Aorta (tissue), 5 donors: ENCODE measurements at regions of chr1 and their contacts with region 1.

Region 1: DNA sequence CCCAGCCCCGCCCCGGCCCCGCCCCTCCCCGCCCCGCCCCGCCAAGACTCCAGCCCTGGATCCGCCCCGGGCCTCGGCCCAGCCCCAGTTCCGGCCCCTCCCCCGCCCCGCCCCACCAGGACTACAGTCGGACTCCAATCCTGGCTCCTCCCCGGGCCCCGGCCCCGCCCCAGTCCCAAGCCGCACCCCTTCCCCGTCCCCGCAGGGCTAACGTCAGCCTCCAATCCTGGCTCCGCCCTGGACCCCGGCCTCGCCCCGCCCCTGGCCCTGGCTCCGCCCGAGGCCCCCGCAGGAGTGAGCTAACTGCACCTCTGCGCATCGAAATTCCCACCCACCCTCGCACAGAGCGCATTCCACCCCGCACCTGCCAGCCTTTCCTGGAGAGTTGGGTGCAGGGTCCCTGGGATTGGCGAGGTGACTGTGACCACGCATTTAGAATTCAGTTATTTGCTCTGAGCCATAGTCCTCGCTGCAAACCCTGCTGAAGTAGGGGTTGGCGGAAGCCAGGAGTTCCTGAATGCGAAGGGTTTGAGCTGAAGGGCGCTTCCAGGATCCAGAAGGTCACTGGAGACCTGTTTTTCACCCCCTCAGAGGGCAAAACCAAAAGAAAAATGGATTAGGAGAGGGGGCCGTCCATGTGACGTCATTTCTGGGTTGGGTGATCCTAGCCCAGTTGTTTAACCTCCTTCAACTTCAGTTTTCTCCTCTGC is 588 bp upstream of the IGSF8 start:
- DNase-seq: peak; percentile 99 to 100
- ATAC-seq: peak; percentile 93
- H3K4me3 ChIP-seq: peak overlapping the region in 1 of 2 donors; percentile 31
- H3K27ac ChIP-seq: peak overlapping the region; percentile 68 to 96
- H3K4me1 ChIP-seq: no peaks in the 10 kb centered on the region
- H3K27me3 ChIP-seq: no peaks in the 10 kb centered on the region

Region 2: GRCh38 chr1:159924981-159925712 is 173.9 kb before region 1 on chr1 and contains the start of gene TAGLN2:
- intact Hi-C with region 1: loop called in 1 of 2 experiments (anchors 5 kb)
- DNase-seq: peak; percentile 96 to 98
- ATAC-seq: peak; percentile 88
- H3K4me3 ChIP-seq: peak within 1 kb of the TSS; percentile 66 to 86
- H3K27ac ChIP-seq: peak within 1 kb of the TSS; percentile 88 to 95
- H3K4me1 ChIP-seq: no peaks in the 10 kb centered on the region
- H3K27me3 ChIP-seq: no peaks in the 10 kb centered on the region
- total RNA-seq, gene TAGLN2: 316 to 350 TPM

Region 3: GRCh38 chr1:160058087-160058486 is 40.9 kb before region 1 on chr1:
- intact Hi-C with region 1: no loop called
- DNase-seq: no peak
- ATAC-seq: no peak
- H3K4me3 ChIP-seq: no peak overlapping the region
- H3K27ac ChIP-seq: no peak overlapping the region
- H3K4me1 ChIP-seq: no peaks in the 10 kb centered on the region
- H3K27me3 ChIP-seq: no peaks in the 10 kb centered on the region

Region 4: DNA sequence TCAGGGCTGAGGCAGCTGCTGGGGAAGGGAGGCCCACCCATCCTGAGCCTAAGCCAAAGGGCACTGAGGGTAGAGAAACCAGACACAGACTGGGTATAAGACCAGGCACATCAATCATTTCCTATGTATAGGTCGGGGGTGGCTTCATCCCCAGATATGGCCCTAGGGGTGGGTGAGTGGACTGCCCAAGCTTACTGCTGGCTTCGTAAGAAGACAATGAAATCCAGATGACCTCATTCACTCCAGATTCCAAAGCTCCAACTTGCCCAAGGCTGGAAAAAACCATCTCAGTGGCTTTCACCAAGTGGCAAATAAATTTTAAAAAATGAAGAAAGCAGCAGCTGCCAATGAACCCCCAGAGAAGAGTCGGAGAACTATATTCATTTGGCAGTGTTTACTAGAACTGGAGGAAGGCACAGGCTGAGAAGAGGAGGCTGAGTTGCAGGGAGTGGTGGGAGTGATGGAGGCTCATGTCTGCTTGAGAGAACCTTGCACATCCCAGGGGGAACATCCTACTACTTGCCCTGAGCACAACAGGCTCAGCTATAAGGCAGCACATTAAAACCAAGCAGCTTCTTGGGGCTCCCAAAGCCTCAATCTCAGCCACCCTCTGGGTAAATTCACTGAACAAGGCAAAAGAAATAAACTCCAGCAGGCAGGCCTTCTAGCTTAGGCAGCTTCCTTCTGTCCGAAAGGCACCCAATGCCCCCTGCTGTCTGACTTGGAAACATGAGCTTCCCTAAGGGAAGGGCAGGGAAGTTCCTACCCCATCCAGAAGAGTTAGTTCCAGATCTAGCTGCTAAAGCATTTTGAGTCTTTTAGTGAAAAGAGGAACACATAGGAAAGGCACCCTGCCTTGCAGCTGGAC is 120.3 kb after region 1 on chr1:
- intact Hi-C with region 1: loop called in 1 of 2 experiments (anchors 2 kb)
- DNase-seq: peak in 1 of 2 donors; percentile 67
- ATAC-seq: peak; percentile 80
- H3K4me3 ChIP-seq: no peak overlapping the region
- H3K27ac ChIP-seq: peak overlapping the region in 1 of 2 donors; percentile 73
- H3K4me1 ChIP-seq: peaks cover 0 to 3% of the 10 kb centered on the region in 2 donors
- H3K27me3 ChIP-seq: no peaks in the 10 kb centered on the region

Region 5: DNA sequence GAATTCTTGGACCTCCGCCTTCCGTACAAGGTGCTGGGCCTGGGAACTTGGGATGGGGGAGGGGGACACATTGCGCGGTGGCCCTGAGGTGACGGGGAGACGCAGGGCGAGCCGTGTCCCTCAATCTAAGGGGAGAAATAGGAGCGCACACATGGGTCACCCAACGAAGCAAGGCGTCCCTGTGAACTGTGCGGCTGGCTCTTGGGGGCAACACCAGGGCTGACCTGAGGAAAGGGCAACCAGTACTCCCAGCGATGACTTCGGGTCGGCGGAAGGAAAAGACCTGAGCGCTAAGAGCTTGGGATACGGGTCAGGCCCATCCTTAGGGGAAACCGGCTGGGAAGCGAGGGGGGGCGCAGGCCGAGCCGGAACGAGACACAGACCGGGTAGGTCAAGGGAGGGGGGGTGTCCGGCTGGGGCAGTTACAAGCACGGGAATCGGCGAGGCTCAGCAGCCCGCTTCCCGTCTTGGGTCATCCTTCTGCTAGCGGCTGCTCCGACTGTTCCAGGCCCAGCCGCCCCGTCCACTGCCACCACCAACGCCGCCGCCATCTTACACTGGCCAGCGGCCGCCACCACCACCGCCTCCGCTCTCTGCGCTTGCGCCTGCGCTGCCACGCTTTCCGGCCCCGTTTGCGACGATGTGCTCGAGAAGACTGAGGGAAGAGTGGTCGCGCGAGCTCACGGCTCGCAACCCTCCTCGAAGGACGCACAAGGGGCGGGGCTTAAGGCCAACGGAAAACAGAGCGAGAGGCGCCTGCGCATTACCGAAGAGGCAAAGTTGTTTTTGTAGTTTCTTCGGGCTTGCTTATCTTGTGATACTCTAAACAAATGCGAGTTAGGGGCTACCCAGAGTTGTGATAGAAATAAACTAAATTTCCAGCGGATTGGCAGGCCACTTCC is 163.1 kb after region 1 on chr1 and contains the start of gene DCAF8:
- intact Hi-C with region 1: loop called in 1 of 2 experiments (anchors 5 kb)
- DNase-seq: peak; percentile 99 to 100
- ATAC-seq: peak; percentile 99
- H3K4me3 ChIP-seq: peak within 1 kb of the TSS; percentile 69 to 93
- H3K27ac ChIP-seq: peak within 1 kb of the TSS; percentile 72 to 87
- H3K4me1 ChIP-seq: peaks cover 0 to 7% of the 10 kb centered on the region in 2 donors
- H3K27me3 ChIP-seq: no peaks in the 10 kb centered on the region
- total RNA-seq, gene DCAF8: 134 to 152 TPM

Region 6: DNA sequence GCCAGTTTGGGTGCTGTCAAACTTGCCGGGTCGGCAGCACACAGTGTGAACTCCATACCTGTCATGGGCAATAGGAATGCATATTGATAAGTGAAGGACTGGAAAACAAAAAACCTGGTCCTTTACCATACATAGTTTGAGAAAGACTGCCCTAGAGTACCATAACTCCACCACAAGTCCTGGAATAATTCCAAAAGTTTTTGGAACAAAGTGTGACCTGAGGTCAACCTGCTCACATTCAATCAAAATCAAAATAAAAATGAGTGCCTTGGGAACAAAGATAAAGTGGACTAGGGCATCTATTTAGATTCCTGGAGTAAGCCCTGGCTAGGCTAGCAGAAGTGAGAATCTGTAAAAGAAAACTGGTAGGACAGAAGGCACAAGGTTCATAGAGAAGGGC is 178.3 kb after region 1 on chr1:
- intact Hi-C with region 1: no loop called
- DNase-seq: no peak
- ATAC-seq: no peak
- H3K4me3 ChIP-seq: no peak overlapping the region
- H3K27ac ChIP-seq: no peak overlapping the region
- H3K4me1 ChIP-seq: no peaks in the 10 kb centered on the region
- H3K27me3 ChIP-seq: no peaks in the 10 kb centered on the region

Region 7: DNA sequence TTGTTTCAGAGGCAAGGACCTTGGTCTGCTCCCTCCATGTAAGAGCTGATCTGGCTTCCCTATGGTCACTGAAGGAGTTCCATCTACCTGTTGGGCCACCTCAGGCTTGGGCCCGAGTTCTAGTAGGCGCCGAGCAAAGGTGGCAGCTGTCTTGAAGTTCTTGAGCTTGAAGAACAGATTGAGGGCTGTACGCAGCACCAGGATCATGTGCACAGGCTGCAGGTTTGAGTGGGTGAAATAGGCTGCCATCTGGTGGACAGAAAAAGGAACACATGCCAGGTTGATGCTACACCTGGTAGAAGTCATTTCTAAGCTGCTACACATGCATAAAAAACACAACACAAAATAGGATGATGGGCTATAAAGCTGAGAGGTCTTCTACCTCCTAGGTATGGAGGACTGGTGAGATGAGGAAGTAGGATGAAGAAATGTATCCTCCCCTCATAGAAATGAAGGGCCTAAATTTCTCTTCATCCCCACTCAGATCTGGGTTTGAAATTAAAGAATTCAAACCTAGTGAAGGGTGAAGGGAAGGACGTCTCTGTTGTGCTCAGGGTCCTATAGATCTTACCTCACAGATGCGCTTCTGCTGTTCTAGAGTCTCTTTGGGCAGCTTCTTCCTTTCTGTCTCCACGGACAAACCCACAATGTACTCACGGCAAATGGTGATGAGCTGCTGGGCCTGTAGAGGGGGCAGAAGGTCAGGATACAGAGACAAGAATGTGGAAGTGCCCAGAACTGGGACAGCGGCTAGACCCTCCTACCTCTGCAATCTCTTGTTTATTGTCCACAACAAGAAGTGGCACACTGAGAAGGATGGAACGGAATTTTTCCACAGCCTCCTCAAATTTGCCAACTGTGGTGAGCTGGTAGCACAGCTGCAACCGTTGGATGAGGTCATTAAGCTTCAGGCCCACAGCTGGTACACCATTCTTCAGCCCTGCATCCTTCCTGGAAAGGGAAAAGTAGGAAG is 192.5 kb after region 1 on chr1:
- intact Hi-C with region 1: loop called (anchors 2 to 5 kb)
- DNase-seq: peak in 1 of 2 donors; percentile 61
- ATAC-seq: peak; percentile 83
- H3K4me3 ChIP-seq: no peak overlapping the region
- H3K27ac ChIP-seq: peak overlapping the region in 1 of 2 donors; percentile 25
- H3K4me1 ChIP-seq: no peaks in the 10 kb centered on the region
- H3K27me3 ChIP-seq: no peaks in the 10 kb centered on the region